BJ (cell line): ENCODE measurements at regions of chr9 and their contacts with region 1.

Region 1: GRCh38 chr9:124771021-124771866 is at the start of gene NR6A1:
- DNase-seq: peak; percentile 68
- H3K4me3 ChIP-seq: peak within 1 kb of the TSS; percentile 60
- H3K27me3 ChIP-seq: peaks cover 26% of the 10 kb centered on the region
- CTCF ChIP-seq: no peak
- polyA plus RNA-seq, gene NR6A1: 0.23 and 0.25 TPM in 2 replicates

Region 2: DNA sequence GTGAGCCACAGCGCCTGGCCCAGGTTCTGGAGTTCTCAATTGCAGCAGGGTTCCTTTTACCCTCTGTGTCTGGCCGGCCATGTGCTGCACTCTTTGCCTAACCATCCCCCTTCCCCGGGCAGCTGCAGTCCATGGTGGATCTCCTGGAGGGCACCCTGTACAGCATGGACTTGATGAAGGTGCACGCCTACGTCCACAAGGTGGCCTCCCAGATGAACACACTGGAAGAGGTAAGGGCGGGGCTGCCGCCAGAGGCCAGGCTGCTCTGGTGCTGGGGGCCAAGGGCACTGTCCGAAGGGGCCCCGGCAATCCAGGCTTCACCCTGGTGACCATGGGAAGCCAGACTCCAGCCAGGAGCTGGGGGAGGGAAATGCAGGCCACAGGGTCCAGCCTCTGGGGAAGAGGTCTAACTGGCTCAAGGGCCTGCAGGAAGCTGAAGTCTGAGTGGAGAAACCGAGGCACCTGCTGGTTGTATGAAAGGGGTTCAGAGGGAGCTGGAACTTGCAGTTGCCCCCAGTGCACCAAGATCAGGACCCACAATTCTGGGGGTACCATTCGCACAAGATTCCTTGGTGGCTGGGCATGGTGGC is 23.8 kb after region 1 on chr9:
- CTCF ChIA-PET with region 1: interaction called, 10 read pairs
- POLR2A ChIA-PET with region 1: no interaction called
- DNase-seq: no peak
- H3K4me3 ChIP-seq: no peak overlapping the region
- H3K27me3 ChIP-seq: no peaks in the 10 kb centered on the region
- CTCF ChIP-seq: no peak

Region 3: DNA sequence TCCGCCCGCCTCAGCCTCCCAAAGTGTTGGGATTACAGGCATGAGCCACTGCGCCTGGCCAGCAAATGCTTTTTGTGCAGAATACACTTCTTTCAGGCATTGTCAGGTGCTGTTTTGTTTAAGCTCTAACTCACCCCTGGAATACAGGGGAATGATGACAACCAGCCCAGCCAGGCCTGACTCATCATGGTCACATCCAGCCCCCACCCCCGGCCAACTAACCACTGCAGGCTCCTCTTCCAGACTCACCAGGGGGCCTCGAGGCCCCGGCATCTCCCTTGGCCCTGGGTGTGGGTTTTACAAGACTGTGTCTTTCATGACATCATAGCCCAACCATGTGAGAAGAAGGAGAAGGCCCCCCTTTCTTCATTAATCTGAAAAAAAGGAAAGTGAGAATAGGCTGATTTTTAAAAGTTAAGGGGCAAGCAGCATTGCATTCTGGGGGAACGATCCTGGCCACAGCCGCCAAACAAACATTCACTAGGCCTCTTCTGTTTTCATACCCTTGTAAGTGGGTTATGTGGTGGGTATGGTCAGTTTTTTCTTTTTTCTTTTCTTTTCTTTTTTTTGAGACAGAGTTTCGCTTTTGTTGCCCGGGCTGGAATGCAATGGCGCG is 41.3 kb after region 1 on chr9:
- CTCF ChIA-PET with region 1: interaction called, 11 read pairs
- POLR2A ChIA-PET with region 1: interaction called, 4 read pairs
- DNase-seq: peak; percentile 98
- H3K4me3 ChIP-seq: no peak overlapping the region
- H3K27me3 ChIP-seq: no peaks in the 10 kb centered on the region
- CTCF ChIP-seq: peak; percentile 24; the same call in 1 of the 2 replicates

Region 4: DNA sequence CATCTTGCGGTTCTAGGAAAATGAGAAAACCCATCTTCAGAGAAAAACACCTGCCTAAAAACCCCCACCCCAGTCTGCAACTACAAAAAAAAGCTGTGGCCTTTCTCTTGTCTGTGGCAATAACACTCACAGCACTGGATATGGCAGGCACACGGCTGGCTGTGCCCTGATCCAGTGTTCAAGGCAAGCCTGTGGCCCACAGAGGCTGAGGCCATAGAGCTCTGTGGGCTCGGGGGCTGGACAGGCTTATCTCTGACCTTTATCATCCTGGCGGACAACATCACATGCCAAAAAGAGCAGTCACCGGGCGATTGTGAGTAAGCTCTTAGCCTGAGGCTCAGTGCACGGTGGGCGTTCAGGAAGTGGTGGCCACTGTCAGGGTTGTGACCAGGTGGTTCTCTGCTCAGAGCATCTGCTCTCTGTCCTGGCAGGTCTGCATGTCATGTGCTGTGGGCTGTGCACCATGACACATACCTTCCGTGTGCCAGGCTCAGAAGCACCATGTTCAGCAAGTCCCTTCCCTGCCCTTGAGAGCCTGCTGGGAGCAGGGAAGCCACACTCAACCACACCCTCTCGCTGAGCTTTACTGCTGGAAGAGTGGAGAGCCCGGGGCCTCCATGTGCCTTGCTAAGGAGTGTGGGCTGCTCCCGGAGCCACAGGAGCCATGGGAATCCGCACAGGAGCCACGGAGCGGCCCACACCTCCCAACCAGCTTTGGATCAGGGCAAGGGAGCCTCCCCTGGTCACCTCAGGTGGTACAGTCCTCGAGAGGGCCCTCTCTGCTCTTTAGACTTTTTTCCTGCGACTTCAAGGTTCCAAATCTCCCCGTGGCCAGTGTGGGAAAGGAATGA is 47.4 kb after region 1 on chr9:
- CTCF ChIA-PET with region 1: interaction called, 11 read pairs
- POLR2A ChIA-PET with region 1: interaction called, 4 read pairs
- DNase-seq: no peak
- H3K4me3 ChIP-seq: no peak overlapping the region
- H3K27me3 ChIP-seq: no peaks in the 10 kb centered on the region
- CTCF ChIP-seq: no peak

Region 5: GRCh38 chr9:124861342-124862229 is 90.3 kb after region 1 on chr9 and contains the starts of genes ARPC5L and RPL35:
- CTCF ChIA-PET with region 1: interaction called, 1,161 read pairs
- POLR2A ChIA-PET with region 1: interaction called, 14 read pairs
- DNase-seq: peak; percentile 53
- H3K4me3 ChIP-seq: peak within 1 kb of the TSS; percentile 96
- H3K27me3 ChIP-seq: no peaks in the 10 kb centered on the region
- CTCF ChIP-seq: peak; percentile 40
- polyA plus RNA-seq, gene ARPC5L: 34.0 and 41.0 TPM in 2 replicates
- polyA plus RNA-seq, gene RPL35: 3,181 and 3,838 TPM in 2 replicates

Region 6: DNA sequence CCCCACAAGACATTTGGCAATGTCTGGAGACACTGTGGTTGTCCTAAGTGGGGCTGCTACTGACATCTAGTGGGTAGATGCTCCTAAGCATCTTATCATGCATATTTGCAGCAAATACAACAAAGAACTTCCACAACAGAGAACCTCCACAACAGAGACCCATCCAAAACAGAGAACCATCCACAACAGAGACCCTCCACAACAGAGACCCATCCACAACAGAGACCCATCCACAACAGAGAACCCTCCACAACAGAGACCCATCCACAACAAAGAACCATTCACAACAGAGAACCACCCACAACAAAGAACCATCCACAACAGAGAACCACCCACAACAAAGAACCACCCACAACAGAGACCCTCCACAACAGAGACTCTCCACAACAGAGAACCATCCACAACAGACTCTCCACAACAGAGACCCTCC is 123.5 kb after region 1 on chr9:
- CTCF ChIA-PET with region 1: interaction called, 16 read pairs
- POLR2A ChIA-PET with region 1: no interaction called
- DNase-seq: no peak
- H3K4me3 ChIP-seq: no peak overlapping the region
- H3K27me3 ChIP-seq: no peaks in the 10 kb centered on the region
- CTCF ChIP-seq: peak; percentile 67

Region 7: GRCh38 chr9:125246261-125246667 is 475.0 kb after region 1 on chr9:
- CTCF ChIA-PET with region 1: no interaction called
- POLR2A ChIA-PET with region 1: no interaction called
- DNase-seq: no peak
- H3K4me3 ChIP-seq: no peak overlapping the region
- H3K27me3 ChIP-seq: no peaks in the 10 kb centered on the region
- CTCF ChIP-seq: no peak

Region 8: GRCh38 chr9:125372441-125373226 is 601.4 kb after region 1 on chr9:
- CTCF ChIA-PET with region 1: interaction called, 14 read pairs
- POLR2A ChIA-PET with region 1: no interaction called
- DNase-seq: no peak
- H3K4me3 ChIP-seq: no peak overlapping the region
- H3K27me3 ChIP-seq: no peaks in the 10 kb centered on the region
- CTCF ChIP-seq: no peak